Naive thymus-derived CD4-positive, alpha-beta T cell (primary cell): ENCODE measurements at regions of chr5 and their contacts with region 1.

Region 1: GRCh38 chr5:43313035-43313853 is at the start of gene HMGCS1:
- DNase-seq: peak; percentile 94 to 99 (median 99)
- ATAC-seq: peak; percentile 93
- H3K4me3 ChIP-seq: peak within 1 kb of the TSS; percentile 89
- H3K4me3 Mint-ChIP-seq: peak within 1 kb of the TSS; percentile 82 to 99 (median 94)
- H3K27ac ChIP-seq: peak within 1 kb of the TSS; percentile 95
- H3K27ac Mint-ChIP-seq: peak within 1 kb of the TSS; percentile 81 to 98 (median 94)
- H3K4me1 ChIP-seq: peaks cover 9 to 12% of the 10 kb centered on the region in 2 donors
- H3K4me1 Mint-ChIP-seq: peaks cover 19 to 63% (median 39%) of the 10 kb centered on the region in 7 donors
- H3K27me3 ChIP-seq: no peaks in the 10 kb centered on the region
- H3K27me3 Mint-ChIP-seq: peaks cover 0 to 2% (median 0%) of the 10 kb centered on the region in 5 donors
- total RNA-seq, gene HMGCS1: 32.2 to 77.5 (median 48.2) TPM

Region 2: DNA sequence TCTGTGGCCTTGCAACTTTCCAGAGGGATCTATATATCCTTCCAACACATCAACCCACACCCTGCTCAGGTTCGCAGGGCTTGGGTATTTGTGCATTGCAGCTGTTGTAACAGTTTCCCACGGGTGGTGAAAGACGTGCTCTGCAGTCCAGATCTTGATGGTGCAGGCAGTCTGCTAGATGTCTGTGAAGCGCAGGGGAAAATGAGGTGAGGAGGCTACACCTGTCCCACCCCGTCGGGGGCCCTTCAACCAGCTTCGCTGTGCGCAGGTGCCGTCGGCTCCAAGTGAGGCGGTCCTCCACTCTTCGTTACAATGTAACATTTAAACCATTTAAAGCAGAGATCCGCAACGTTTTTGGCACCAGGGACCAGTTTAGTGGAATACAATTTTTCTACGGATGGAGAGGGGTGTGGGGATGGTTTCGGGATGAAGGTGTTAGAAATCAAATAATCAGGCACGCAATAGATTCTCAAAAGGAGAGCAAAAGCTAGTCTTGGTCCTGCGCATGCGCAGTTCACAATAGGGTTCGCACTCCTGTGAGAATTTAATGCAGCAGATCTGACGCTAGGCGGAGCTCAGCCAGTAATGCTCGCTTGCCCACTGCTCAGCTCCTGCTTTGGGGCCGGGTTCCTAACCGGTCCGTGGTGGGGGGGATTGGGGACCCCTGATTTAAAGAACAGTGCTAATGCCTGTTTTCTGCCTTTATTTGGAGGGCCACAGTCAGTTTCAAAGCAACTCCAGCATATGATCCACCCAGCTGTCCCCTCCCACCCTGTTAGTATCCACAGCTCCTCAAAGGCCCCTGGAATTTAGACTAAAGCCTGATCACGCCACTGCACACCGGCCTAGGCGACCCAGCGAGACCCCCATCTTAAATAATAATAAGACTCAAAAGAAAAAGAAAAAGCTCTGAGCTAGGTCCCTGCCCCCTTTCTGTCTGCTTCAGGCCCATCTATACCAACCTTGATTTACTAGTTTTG is 404.4 kb before region 1 on chr5:
- CTCF ChIA-PET with region 1: interaction called, 6 read pairs
- POLR2A ChIA-PET with region 1: interaction called, 4 read pairs
- intact Hi-C with region 1: loop called (anchors 1 to 2 kb)
- DNase-seq: peak; percentile 76 to 93 (median 88)
- ATAC-seq: peak; percentile 92
- H3K4me3 ChIP-seq: peak overlapping the region; percentile 72
- H3K4me3 Mint-ChIP-seq: peak overlapping the region; percentile 89 to 98 (median 94)
- H3K27ac ChIP-seq: peak overlapping the region; percentile 76
- H3K27ac Mint-ChIP-seq: peak overlapping the region; percentile 64 to 97 (median 95)
- H3K4me1 ChIP-seq: peaks cover 0 to 4% of the 10 kb centered on the region in 2 donors
- H3K4me1 Mint-ChIP-seq: peaks cover 5 to 22% (median 19%) of the 10 kb centered on the region in 7 donors
- H3K27me3 ChIP-seq: no peaks in the 10 kb centered on the region
- H3K27me3 Mint-ChIP-seq: peaks cover 0 to 43% (median 0%) of the 10 kb centered on the region in 5 donors

Region 3: DNA sequence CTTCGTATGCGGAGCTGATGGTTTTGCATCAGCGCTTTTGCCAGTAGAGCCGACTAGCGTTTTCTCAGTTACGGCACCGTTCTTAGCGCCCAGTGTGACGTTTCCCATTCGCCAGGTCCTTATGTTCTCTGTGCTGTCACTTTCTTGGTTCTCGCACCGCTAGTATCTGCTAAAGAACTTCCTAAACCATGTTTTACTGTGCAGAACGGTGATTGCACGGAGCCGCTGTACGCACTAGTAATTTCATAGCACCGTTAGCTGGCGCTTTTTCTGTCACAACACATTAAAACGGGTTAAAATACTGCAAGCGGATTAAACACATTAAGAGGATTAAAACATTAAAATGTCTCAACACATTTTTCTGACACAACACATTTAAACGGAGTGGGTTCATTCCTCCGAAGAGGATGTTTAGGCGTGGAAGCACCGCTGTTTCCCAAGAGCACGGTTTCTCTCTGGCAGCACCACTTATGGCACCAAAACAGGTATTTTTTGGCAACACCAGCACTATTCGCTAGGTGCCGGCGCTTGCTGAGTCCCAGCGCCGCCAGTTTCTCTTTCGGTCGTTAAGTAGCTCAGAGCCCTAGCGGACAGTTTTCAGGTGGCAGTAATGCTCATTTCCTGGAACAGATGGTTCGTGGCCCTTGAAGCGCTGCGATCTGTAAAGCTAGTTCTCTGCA is 293.5 kb before region 1 on chr5:
- CTCF ChIA-PET with region 1: interaction called, 4 read pairs
- POLR2A ChIA-PET with region 1: interaction called, 13 read pairs
- intact Hi-C with region 1: loop called (anchors 1 to 2 kb)
- DNase-seq: peak; percentile 63 to 94 (median 88)
- ATAC-seq: peak; percentile 77
- H3K4me3 ChIP-seq: peak overlapping the region; percentile 76
- H3K4me3 Mint-ChIP-seq: peak overlapping the region; percentile 92 to 99 (median 98)
- H3K27ac ChIP-seq: peak overlapping the region; percentile 96
- H3K27ac Mint-ChIP-seq: peak overlapping the region; percentile 96 to 100 (median 99)
- H3K4me1 ChIP-seq: peaks cover 34 to 35% of the 10 kb centered on the region in 2 donors
- H3K4me1 Mint-ChIP-seq: peaks cover 20 to 52% (median 46%) of the 10 kb centered on the region in 7 donors
- H3K27me3 ChIP-seq: no peaks in the 10 kb centered on the region
- H3K27me3 Mint-ChIP-seq: no peaks in the 10 kb centered on the region

Region 4: GRCh38 chr5:43110606-43111442 is 202.4 kb before region 1 on chr5:
- CTCF ChIA-PET with region 1: interaction called, 4 read pairs
- POLR2A ChIA-PET with region 1: interaction called, 6 read pairs
- intact Hi-C with region 1: loop called in 1 of 2 experiments (anchors 1 kb)
- DNase-seq: peak in 7 of 9 donors; percentile 44 to 59 (median 51)
- ATAC-seq: peak; percentile 87
- H3K4me3 ChIP-seq: no peak overlapping the region
- H3K4me3 Mint-ChIP-seq: peak overlapping the region; percentile 37 to 86 (median 60)
- H3K27ac ChIP-seq: peak overlapping the region; percentile 54
- H3K27ac Mint-ChIP-seq: peak overlapping the region; percentile 66 to 97 (median 89)
- H3K4me1 ChIP-seq: peaks cover 0 to 28% of the 10 kb centered on the region in 2 donors
- H3K4me1 Mint-ChIP-seq: peaks cover 13 to 35% (median 28%) of the 10 kb centered on the region in 7 donors
- H3K27me3 ChIP-seq: no peaks in the 10 kb centered on the region
- H3K27me3 Mint-ChIP-seq: no peaks in the 10 kb centered on the region

Region 5: DNA sequence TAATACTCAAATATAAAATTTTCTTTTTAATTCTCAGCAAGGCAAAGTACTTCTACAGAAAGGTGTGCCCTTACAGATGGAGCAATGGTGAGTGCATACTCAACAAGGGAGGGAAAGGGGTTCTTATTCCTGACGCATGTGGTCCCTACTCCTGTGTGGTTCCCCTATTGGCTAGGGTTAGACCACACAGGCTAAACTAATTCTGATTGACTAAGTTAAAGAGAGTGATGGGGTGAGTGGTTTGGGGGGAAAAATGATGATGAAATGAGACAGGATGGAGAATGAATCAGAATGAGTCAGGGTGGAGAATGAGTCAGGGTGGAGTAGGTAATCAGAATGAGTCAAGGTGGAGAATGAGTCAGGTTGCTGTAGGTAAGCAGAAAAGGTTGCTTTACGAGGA is 22.9 kb after region 1 on chr5:
- CTCF ChIA-PET with region 1: no interaction called
- POLR2A ChIA-PET with region 1: no interaction called
- intact Hi-C with region 1: no loop called
- DNase-seq: no peak
- ATAC-seq: no peak
- H3K4me3 ChIP-seq: no peak overlapping the region
- H3K4me3 Mint-ChIP-seq: no peak overlapping the region
- H3K27ac ChIP-seq: no peak overlapping the region
- H3K27ac Mint-ChIP-seq: no peak overlapping the region
- H3K4me1 ChIP-seq: no peaks in the 10 kb centered on the region
- H3K4me1 Mint-ChIP-seq: peaks cover 0 to 7% (median 0%) of the 10 kb centered on the region in 7 donors
- H3K27me3 ChIP-seq: no peaks in the 10 kb centered on the region
- H3K27me3 Mint-ChIP-seq: peaks cover 0 to 52% (median 33%) of the 10 kb centered on the region in 5 donors

Region 6: GRCh38 chr5:43357067-43357466 is 43.8 kb after region 1 on chr5:
- CTCF ChIA-PET with region 1: no interaction called
- POLR2A ChIA-PET with region 1: no interaction called
- intact Hi-C with region 1: no loop called
- DNase-seq: no peak
- ATAC-seq: no peak
- H3K4me3 ChIP-seq: no peak overlapping the region
- H3K4me3 Mint-ChIP-seq: no peak overlapping the region
- H3K27ac ChIP-seq: no peak overlapping the region
- H3K27ac Mint-ChIP-seq: no peak overlapping the region
- H3K4me1 ChIP-seq: no peaks in the 10 kb centered on the region
- H3K4me1 Mint-ChIP-seq: no peaks in the 10 kb centered on the region
- H3K27me3 ChIP-seq: no peaks in the 10 kb centered on the region
- H3K27me3 Mint-ChIP-seq: no peaks in the 10 kb centered on the region

Region 7: GRCh38 chr5:43514816-43515677 is 201.8 kb after region 1 on chr5 and contains the start of gene C5orf34:
- CTCF ChIA-PET with region 1: no interaction called
- POLR2A ChIA-PET with region 1: interaction called, 5 read pairs
- intact Hi-C with region 1: loop called (anchors 1 kb)
- DNase-seq: peak; percentile 84 to 94 (median 89)
- ATAC-seq: peak; percentile 97
- H3K4me3 ChIP-seq: peak within 1 kb of the TSS; percentile 84
- H3K4me3 Mint-ChIP-seq: peak within 1 kb of the TSS; percentile 90 to 97 (median 94)
- H3K27ac ChIP-seq: peak within 1 kb of the TSS; percentile 81
- H3K27ac Mint-ChIP-seq: peak within 1 kb of the TSS; percentile 90 to 98 (median 95)
- H3K4me1 ChIP-seq: peaks cover 8 to 14% of the 10 kb centered on the region in 2 donors
- H3K4me1 Mint-ChIP-seq: peaks cover 17 to 42% (median 36%) of the 10 kb centered on the region in 7 donors
- H3K27me3 ChIP-seq: no peaks in the 10 kb centered on the region
- H3K27me3 Mint-ChIP-seq: no peaks in the 10 kb centered on the region
- total RNA-seq, gene C5orf34: 1.1 to 5.2 (median 3.3) TPM